ENCODE measurements at regions of chrX and their contacts with region 1.

Region 1: GRCh38 chrX:130165703-130166502 is at the start of gene AIFM1:
- DNase-seq: peak; percentile 92
- H3K4me3 Mint-ChIP-seq: peak within 1 kb of the TSS; percentile 75
- H3K27ac Mint-ChIP-seq: peak within 1 kb of the TSS; percentile 49
- H3K4me1 Mint-ChIP-seq: peaks cover 6% of the 10 kb centered on the region
- H3K27me3 Mint-ChIP-seq: peaks cover 43% of the 10 kb centered on the region
- CTCF ChIP-seq: no peak
- total RNA-seq, gene AIFM1: 43.2 and 45.3 TPM in 2 replicates

Region 2: GRCh38 chrX:130110379-130111219 is 55.3 kb before region 1 on chrX and contains the start of gene ELF4:
- CTCF ChIA-PET with region 1: interaction called, 3 read pairs
- POLR2A ChIA-PET with region 1: interaction called, 28 read pairs
- intact Hi-C with region 1: no loop called
- DNase-seq: peak; percentile 79
- H3K4me3 Mint-ChIP-seq: peak within 1 kb of the TSS; percentile 88
- H3K27ac Mint-ChIP-seq: peak within 1 kb of the TSS; percentile 81
- H3K4me1 Mint-ChIP-seq: peaks cover 19% of the 10 kb centered on the region
- H3K27me3 Mint-ChIP-seq: peaks cover 14% of the 10 kb centered on the region
- CTCF ChIP-seq: no peak
- total RNA-seq, gene ELF4: 19.5 and 23.6 TPM in 2 replicates

Region 3: GRCh38 chrX:130120746-130121504 is 45.0 kb before region 1 on chrX:
- CTCF ChIA-PET with region 1: no interaction called
- POLR2A ChIA-PET with region 1: interaction called, 11 read pairs
- intact Hi-C with region 1: loop called (anchors 1 kb)
- DNase-seq: peak; percentile 77
- H3K4me3 Mint-ChIP-seq: peak overlapping the region; percentile 61
- H3K27ac Mint-ChIP-seq: peak overlapping the region; percentile 51
- H3K4me1 Mint-ChIP-seq: peaks cover 25% of the 10 kb centered on the region
- H3K27me3 Mint-ChIP-seq: peaks cover 12% of the 10 kb centered on the region
- CTCF ChIP-seq: peak; percentile 37

Region 4: DNA sequence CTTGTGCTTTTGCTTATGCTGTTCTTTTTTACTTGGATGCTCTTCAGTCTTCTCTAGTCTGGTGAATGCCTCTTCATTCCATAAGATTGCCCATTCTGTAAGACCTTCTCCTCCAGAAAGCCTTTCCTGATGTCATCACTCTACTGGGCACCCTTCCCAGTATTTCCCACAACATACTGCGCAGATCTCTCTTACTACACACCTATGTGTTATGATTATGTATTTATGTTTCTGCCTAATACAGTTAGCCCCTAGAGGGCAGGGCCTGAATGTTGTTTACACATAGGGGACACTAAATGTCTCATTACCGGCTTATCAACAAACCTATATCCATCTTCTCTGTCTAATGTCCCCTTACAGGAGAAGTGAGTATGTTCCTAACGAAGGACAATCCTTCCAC is 21.4 kb before region 1 on chrX:
- CTCF ChIA-PET with region 1: interaction called, 3 read pairs
- POLR2A ChIA-PET with region 1: interaction called, 10 read pairs
- intact Hi-C with region 1: no loop called
- DNase-seq: peak; percentile 84
- H3K4me3 Mint-ChIP-seq: no peak overlapping the region
- H3K27ac Mint-ChIP-seq: no peak overlapping the region
- H3K4me1 Mint-ChIP-seq: peaks cover 7% of the 10 kb centered on the region
- H3K27me3 Mint-ChIP-seq: peaks cover 67% of the 10 kb centered on the region
- CTCF ChIP-seq: peak; percentile 19

Region 5: GRCh38 chrX:130196466-130196865 is 30.6 kb after region 1 on chrX:
- CTCF ChIA-PET with region 1: interaction called, 5 read pairs
- POLR2A ChIA-PET with region 1: no interaction called
- intact Hi-C with region 1: loop called (anchors 1 kb)
- DNase-seq: no peak
- H3K4me3 Mint-ChIP-seq: no peak overlapping the region
- H3K27ac Mint-ChIP-seq: no peak overlapping the region
- H3K4me1 Mint-ChIP-seq: no peaks in the 10 kb centered on the region
- H3K27me3 Mint-ChIP-seq: peaks cover 13% of the 10 kb centered on the region
- CTCF ChIP-seq: no peak

Region 6: GRCh38 chrX:130716781-130717413 is 551.0 kb after region 1 on chrX:
- CTCF ChIA-PET with region 1: no interaction called
- POLR2A ChIA-PET with region 1: no interaction called
- intact Hi-C with region 1: no loop called
- DNase-seq: no peak
- H3K4me3 Mint-ChIP-seq: no peak overlapping the region
- H3K27ac Mint-ChIP-seq: no peak overlapping the region
- H3K4me1 Mint-ChIP-seq: no peaks in the 10 kb centered on the region
- H3K27me3 Mint-ChIP-seq: peaks cover 65% of the 10 kb centered on the region
- CTCF ChIP-seq: no peak